Activated CD4-positive, alpha-beta memory T cell treated with anti-CD3 and anti-CD28 coated beads, Interleukin-2, amount 10 ng/mL, durations not matched to agents 7 days and 5 days (primary cell): ENCODE measurements at regions of chr20 and their contacts with region 1.

Region 1: DNA sequence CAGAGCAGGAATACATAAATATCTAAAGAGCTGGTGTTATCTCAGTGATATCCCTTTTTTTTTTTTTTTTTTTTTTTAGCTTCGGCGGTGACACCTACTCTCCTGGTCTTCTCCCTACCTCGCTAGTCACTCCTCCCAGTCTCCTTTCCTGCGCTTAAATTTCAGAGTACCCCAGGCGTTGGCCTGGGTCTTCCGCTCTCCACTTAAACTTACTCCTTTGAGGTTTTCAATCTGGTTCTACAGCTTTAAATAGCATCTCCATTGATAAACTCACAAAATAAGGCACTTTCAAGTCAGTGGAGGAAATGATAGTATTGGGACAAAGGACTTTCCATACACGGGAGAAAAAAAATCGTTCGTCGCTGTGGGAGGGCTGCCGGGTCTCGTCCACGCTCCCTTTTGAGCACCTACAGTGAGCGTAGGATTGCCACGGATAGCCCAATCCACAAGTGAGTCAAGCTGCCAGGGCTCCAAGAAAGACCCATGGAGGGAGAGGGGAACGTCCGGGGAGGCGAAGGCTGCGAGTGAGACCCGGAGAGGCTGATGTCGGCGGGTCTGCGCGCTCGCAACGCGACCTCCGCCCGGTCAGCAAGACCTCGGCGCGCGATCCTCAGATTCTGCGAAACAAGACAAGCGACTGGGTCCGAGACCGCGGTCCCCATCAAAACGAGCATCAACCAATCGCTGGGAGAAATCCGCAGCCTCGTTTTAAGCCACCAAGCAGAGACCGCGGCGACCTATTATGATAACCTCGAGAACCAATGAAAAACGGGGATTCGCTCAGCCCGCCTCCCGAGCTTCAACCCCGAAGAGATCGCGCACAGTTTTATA is 672 bp upstream of the SRSF6 start:
- DNase-seq: peak; percentile 91
- H3K4me3 Mint-ChIP-seq: peak overlapping the region; percentile 86
- H3K27ac Mint-ChIP-seq: peak overlapping the region; percentile 93
- H3K4me1 Mint-ChIP-seq: peaks cover 33% of the 10 kb centered on the region
- H3K27me3 Mint-ChIP-seq: peaks cover 4% of the 10 kb centered on the region

Region 2: DNA sequence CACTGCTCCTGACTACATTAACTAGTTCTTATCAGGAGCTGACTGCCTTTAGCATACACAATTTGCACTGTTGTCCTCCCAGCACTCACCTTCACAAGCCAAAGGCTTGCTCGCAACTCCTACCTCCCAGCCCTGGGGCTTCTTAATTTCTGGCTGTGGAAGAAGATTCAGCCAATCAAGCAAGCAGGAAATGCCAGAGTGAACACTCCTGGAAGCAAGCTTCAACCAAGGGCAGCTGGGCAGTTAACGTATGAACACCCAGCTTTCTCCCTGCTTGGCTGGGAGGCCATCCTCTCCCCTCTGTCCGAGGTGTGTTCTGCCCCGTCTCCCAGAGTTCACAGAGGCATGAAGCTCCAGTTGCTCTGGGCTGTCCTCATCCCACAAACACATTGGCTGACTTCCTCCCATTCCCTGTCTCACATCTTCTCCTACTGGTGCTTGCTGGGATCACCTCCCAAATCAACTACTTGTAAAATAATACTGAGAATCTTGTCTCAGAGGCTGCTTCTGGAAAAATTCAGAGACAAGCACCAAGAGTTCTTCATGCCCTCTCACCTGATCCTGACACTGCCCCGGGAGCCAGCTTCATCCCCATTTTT is 14.6 kb before region 1 on chr20:
- CTCF ChIA-PET with region 1: interaction called, 4 read pairs
- POLR2A ChIA-PET with region 1: interaction called, 12 read pairs
- DNase-seq: no peak
- H3K4me3 Mint-ChIP-seq: no peak overlapping the region
- H3K27ac Mint-ChIP-seq: no peak overlapping the region
- H3K4me1 Mint-ChIP-seq: peaks cover 5% of the 10 kb centered on the region
- H3K27me3 Mint-ChIP-seq: peaks cover 6% of the 10 kb centered on the region

Region 3: GRCh38 chr20:43472671-43473380 is 15.8 kb after region 1 on chr20:
- CTCF ChIA-PET with region 1: no interaction called
- POLR2A ChIA-PET with region 1: interaction called, 13 read pairs
- DNase-seq: no peak
- H3K4me3 Mint-ChIP-seq: no peak overlapping the region
- H3K27ac Mint-ChIP-seq: no peak overlapping the region
- H3K4me1 Mint-ChIP-seq: no peaks in the 10 kb centered on the region
- H3K27me3 Mint-ChIP-seq: peaks cover 4% of the 10 kb centered on the region

Region 4: GRCh38 chr20:43490038-43490437 is 33.0 kb after region 1 on chr20:
- CTCF ChIA-PET with region 1: no interaction called
- POLR2A ChIA-PET with region 1: interaction called, 11 read pairs
- DNase-seq: no peak
- H3K4me3 Mint-ChIP-seq: no peak overlapping the region
- H3K27ac Mint-ChIP-seq: no peak overlapping the region
- H3K4me1 Mint-ChIP-seq: peaks cover 14% of the 10 kb centered on the region
- H3K27me3 Mint-ChIP-seq: peaks cover 2% of the 10 kb centered on the region

Region 5: GRCh38 chr20:43514062-43514999 is 57.3 kb after region 1 on chr20:
- CTCF ChIA-PET with region 1: interaction called, 7 read pairs
- POLR2A ChIA-PET with region 1: interaction called, 31 read pairs
- DNase-seq: peak; percentile 94
- H3K4me3 Mint-ChIP-seq: peak overlapping the region; percentile 92
- H3K27ac Mint-ChIP-seq: peak overlapping the region; percentile 79
- H3K4me1 Mint-ChIP-seq: peaks cover 10% of the 10 kb centered on the region
- H3K27me3 Mint-ChIP-seq: peaks cover 2% of the 10 kb centered on the region

Region 6: GRCh38 chr20:43558412-43559146 is 101.6 kb after region 1 on chr20 and contains the start of gene SGK2:
- CTCF ChIA-PET with region 1: no interaction called
- POLR2A ChIA-PET with region 1: no interaction called
- DNase-seq: no peak
- H3K4me3 Mint-ChIP-seq: no peak within 1 kb of the TSS
- H3K27ac Mint-ChIP-seq: no peak within 1 kb of the TSS
- H3K4me1 Mint-ChIP-seq: no peaks in the 10 kb centered on the region
- H3K27me3 Mint-ChIP-seq: no peaks in the 10 kb centered on the region
- total RNA-seq, gene SGK2: 0.53 TPM in 1 of 2 experiments, not detected in the other

Region 7: GRCh38 chr20:43590392-43591323 is 133.6 kb after region 1 on chr20 and contains the start of gene IFT52:
- CTCF ChIA-PET with region 1: no interaction called
- POLR2A ChIA-PET with region 1: interaction called, 29 read pairs
- DNase-seq: peak; percentile 91
- H3K4me3 Mint-ChIP-seq: peak within 1 kb of the TSS; percentile 73
- H3K27ac Mint-ChIP-seq: peak within 1 kb of the TSS; percentile 86
- H3K4me1 Mint-ChIP-seq: peaks cover 22% of the 10 kb centered on the region
- H3K27me3 Mint-ChIP-seq: no peaks in the 10 kb centered on the region
- total RNA-seq, gene IFT52: 13.3 to 15.0 TPM

Region 8: DNA sequence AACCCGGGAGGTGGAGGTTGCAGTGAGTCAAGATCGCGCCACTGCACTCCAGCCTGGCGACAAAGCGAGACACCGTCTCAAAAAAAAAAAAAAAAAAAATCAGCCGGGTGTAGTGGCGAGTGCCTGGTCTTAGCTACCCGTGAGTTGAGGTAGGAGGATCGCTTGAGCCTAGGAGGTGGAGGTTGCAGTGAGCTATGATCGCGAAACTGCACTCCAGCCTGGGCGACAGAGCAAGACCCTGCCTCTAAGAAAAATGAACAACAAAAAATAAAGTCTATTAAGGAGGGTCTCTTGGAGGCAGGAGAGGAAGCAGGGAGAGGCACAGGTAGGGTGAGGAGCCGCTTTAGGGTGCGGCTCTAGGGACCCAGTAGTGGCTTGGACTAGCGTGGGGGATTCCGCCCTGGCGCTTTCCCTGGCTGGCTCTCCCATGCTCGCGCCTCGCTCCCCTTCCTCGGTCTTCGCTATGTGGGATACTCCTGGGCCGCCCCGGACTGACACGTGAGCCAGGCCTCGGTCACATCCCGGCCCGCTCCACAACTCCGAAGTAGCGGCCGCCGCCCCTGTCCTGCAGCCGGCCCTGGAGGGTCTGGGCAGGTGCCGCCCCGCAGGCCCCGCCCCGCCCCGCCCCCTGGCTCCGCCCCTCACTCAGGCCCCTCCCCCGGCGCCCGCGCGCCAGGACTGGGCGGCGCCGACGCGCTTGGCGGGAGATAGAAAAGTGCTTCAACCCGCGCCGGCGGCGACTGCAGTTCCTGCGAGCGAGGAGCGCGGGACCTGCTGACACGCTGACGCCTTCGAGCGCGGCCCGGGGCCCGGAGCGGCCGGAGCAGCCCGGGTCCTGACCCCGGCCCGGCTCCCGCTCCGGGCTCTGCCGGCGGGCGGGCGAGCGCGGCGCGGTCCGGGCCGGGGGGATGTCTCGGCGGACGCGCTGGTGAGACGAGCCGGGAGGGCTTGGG is 209.6 kb after region 1 on chr20 and contains the start of gene MYBL2:
- CTCF ChIA-PET with region 1: no interaction called
- POLR2A ChIA-PET with region 1: interaction called, 31 read pairs
- DNase-seq: peak; percentile 81
- H3K4me3 Mint-ChIP-seq: peak within 1 kb of the TSS; percentile 78
- H3K27ac Mint-ChIP-seq: no peak within 1 kb of the TSS
- H3K4me1 Mint-ChIP-seq: peaks cover 21% of the 10 kb centered on the region
- H3K27me3 Mint-ChIP-seq: peaks cover 11% of the 10 kb centered on the region
- total RNA-seq, gene MYBL2: 73.5 to 76.6 TPM

Region 9: GRCh38 chr20:44038681-44039123 is 581.7 kb after region 1 on chr20:
- CTCF ChIA-PET with region 1: no interaction called
- POLR2A ChIA-PET with region 1: no interaction called
- DNase-seq: no peak
- H3K4me3 Mint-ChIP-seq: no peak overlapping the region
- H3K27ac Mint-ChIP-seq: no peak overlapping the region
- H3K4me1 Mint-ChIP-seq: peaks cover 12% of the 10 kb centered on the region
- H3K27me3 Mint-ChIP-seq: peaks cover 81% of the 10 kb centered on the region